Activated CD4-positive, alpha-beta T cell treated with anti-CD3 and anti-CD28 coated beads, Interleukin-2, amount 10 ng/mL, durations not matched to agents 24 days and 14 days (primary cell): ENCODE measurements at regions of chr9 and their contacts with region 1.

Region 1: DNA sequence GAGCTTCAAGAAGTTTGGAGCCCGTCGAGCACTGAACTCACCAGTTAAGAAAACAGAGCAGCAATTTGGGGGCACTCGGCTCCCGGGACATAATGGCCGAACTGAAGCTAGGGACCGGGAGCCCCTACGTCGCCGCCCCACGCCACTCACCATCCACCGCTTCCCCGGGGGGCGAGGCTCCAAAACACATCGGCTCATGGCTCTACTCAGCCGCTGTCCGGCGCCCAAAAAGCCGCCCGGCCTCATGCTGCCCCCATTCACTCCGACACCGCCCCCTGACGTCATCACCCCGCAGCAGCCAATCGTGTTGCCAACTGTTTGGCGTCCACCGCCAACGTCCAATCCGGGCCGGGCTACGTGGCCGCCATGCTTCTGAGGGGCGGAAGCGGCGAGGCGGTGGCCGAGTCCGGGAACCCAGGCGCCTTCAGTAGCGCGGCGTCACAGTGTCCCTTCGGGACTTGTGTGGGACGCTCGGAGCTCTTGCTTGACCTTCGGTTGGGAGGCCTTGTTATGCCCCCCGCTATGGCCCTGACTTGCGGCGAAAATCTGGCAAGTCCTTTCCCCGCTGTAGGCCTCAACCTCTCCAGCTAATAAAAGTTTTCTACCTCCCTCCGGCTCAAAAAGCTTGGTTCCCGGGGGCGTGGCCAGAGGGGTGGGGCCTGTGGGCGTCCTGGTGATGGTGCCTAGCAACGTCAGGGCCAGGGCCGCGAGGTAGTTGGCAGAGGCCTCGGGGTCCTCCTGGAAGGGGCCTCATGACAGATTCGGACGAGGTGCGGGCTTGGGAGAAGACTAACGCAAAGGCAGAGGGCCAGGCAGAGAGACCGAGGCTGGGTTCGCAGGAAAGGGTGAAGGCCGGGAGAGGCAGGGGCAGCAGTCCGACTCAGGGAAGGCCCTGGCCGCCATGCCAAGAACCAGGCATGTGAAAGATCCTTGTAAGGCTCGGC is at the starts of genes PTRH1 and TTC16:
- DNase-seq: peak; percentile 100
- H3K4me3 Mint-ChIP-seq: peak within 1 kb of the TSS; percentile 100
- H3K27ac Mint-ChIP-seq: peak within 1 kb of the TSS; percentile 99
- H3K4me1 Mint-ChIP-seq: peaks cover 27% of the 10 kb centered on the region
- H3K27me3 Mint-ChIP-seq: peaks cover 2% of the 10 kb centered on the region
- total RNA-seq, gene PTRH1: 22.8 TPM in 2 replicates
- total RNA-seq, gene TTC16: not detected in 2 replicates

Region 2: GRCh38 chr9:126956917-126957686 is 758.6 kb before region 1 on chr9:
- intact Hi-C with region 1: no loop called
- DNase-seq: no peak
- H3K4me3 Mint-ChIP-seq: no peak overlapping the region
- H3K27ac Mint-ChIP-seq: no peak overlapping the region
- H3K4me1 Mint-ChIP-seq: no peaks in the 10 kb centered on the region
- H3K27me3 Mint-ChIP-seq: peaks cover 36% of the 10 kb centered on the region

Region 3: DNA sequence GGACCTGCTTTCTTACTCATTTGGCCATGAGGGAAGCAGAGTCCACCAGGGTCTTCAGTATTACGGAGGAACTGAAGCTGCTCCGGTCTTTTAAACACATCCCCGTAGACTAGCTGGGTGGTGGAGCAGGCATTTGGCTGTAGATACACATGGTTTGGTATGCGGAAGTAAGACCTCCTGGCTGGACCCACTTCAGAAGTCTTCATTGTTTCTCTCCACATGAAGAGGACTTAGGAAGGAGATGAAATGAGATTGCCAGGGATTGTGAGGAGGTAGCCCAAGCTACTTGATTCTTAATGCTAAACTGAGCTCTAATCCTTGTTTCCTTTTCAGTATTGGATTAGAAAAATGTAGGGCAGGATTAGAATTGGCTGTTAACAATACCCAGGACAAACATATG is 70.7 kb before region 1 on chr9:
- intact Hi-C with region 1: no loop called
- DNase-seq: no peak
- H3K4me3 Mint-ChIP-seq: no peak overlapping the region
- H3K27ac Mint-ChIP-seq: no peak overlapping the region
- H3K4me1 Mint-ChIP-seq: peaks cover 2% of the 10 kb centered on the region
- H3K27me3 Mint-ChIP-seq: peaks cover 7% of the 10 kb centered on the region

Region 4: DNA sequence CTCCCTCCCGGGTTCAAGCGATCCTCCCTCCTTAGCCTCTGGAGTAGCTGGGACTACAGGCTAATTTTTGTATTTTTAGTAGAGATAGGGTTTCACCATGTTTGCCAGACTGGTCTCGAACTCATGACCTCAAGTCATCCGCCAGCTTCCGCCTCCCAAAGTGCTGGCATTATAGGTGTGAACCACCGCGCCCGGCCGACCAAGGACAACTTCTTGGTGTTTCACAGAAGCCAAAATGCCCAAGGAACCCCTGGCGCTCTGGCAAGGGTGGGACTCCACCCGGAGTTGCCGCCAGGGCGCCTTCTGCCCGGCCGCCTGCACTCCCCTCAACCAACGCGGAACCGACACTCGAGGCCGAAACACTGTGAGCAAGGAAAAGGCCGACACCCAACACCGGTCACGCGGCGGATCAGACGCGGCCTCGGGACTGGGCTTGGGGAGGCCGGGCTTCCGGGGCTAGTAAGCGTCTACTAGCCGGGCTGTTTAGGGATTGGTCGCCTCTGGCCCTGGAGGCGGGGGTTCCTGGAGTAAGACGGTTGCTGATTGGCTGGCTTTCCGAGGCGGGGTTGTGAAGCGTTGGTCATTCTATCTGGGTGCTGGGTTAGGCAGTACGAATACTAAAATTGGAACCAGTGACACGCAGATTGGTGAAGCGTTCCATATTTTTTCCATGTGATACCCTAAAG is 16.5 kb before region 1 on chr9:
- intact Hi-C with region 1: loop called (anchors 1 kb)
- DNase-seq: peak; percentile 95
- H3K4me3 Mint-ChIP-seq: peak overlapping the region; percentile 71
- H3K27ac Mint-ChIP-seq: peak overlapping the region; percentile 69
- H3K4me1 Mint-ChIP-seq: peaks cover 7% of the 10 kb centered on the region
- H3K27me3 Mint-ChIP-seq: no peaks in the 10 kb centered on the region

Region 5: GRCh38 chr9:127770905-127771569 is 55.4 kb after region 1 on chr9:
- intact Hi-C with region 1: loop called (anchors 2 kb)
- DNase-seq: peak; percentile 99
- H3K4me3 Mint-ChIP-seq: peak overlapping the region; percentile 93
- H3K27ac Mint-ChIP-seq: peak overlapping the region; percentile 94
- H3K4me1 Mint-ChIP-seq: peaks cover 58% of the 10 kb centered on the region
- H3K27me3 Mint-ChIP-seq: no peaks in the 10 kb centered on the region